Breast epithelium (tissue), 4 donors: ENCODE measurements at regions of chr3 and their contacts with region 1.

Region 1: GRCh38 chr3:3165241-3165640 is 14.2 kb downstream of the CRBN start:
- DNase-seq: no peak
- H3K4me3 ChIP-seq: no peak overlapping the region
- H3K27ac ChIP-seq: no peak overlapping the region
- H3K4me1 ChIP-seq: no peaks in the 10 kb centered on the region
- H3K27me3 ChIP-seq: no peaks in the 10 kb centered on the region
- CTCF ChIP-seq: no peak
- POLR2A ChIP-seq: no peak

Region 2: DNA sequence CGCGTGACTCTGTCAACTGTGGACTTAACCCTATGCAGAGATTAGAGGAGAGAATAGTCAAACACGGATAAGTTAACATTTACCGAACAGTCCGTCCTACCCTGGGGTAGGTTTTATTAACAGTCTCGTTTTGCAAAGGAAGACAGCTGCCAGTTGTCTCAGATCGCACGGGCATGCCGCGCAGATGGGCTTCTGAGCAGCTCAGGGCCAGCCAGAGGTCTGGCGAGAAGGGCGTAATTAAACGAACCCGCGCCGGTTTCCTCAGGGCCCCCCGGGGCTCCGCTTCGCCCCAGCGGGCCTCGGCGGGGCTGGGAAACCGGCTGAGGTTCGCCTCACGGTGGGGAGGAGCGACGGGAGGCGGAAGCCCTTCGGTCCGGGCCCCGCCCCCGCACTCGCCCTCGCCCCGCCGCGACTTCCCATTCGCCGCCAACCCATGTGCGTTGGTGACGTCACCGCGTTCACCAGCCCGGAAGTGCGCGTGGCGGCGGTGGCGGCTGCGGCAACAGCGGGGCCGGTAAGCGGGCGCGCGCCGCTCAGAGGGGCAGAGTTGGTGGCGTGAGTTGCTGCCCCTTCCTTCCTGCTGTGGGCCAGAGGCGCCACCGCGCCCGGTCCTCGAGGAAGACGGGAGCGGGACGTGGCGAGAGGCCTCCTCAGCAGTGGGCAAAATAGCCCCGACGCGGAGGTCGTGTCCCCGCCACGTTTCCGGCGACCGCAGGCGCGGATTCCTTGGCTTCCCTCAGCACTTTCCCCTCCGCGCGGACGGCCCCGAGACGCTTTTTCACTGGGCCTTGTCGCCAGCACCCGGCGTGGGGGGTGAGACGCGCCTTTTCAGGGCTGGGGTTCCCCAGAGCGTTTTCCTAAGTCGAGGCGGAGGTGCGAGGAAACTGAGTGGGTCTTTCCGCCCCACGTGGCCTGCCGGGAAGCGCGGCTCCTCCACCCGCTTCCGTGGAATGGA is 38.5 kb before region 1 on chr3 and contains the start of gene TRNT1:
- intact Hi-C with region 1: no loop called
- DNase-seq: peak; percentile 92 to 97
- H3K4me3 ChIP-seq: peak within 1 kb of the TSS; percentile 81 to 91 (median 81)
- H3K27ac ChIP-seq: peak within 1 kb of the TSS; percentile 90 to 92
- H3K4me1 ChIP-seq: peaks cover 2 to 7% of the 10 kb centered on the region in 2 donors
- H3K27me3 ChIP-seq: no peaks in the 10 kb centered on the region
- CTCF ChIP-seq: no peak
- POLR2A ChIP-seq: peak; percentile 41
- total RNA-seq, gene TRNT1: 16.0 to 24.0 (median 19.0) TPM

Region 3: GRCh38 chr3:4466741-4467521 is 1301.7 kb after region 1 on chr3 and contains the start of gene SUMF1:
- intact Hi-C with region 1: loop called (anchors 5 kb)
- DNase-seq: peak; percentile 67 to 75
- H3K4me3 ChIP-seq: peak within 1 kb of the TSS; percentile 78 to 99 (median 91)
- H3K27ac ChIP-seq: peak within 1 kb of the TSS; percentile 89 to 90
- H3K4me1 ChIP-seq: no peaks in the 10 kb centered on the region
- H3K27me3 ChIP-seq: no peaks in the 10 kb centered on the region
- CTCF ChIP-seq: no peak
- POLR2A ChIP-seq: no peak
- total RNA-seq, gene SUMF1: 84.2 to 87.1 (median 84.9) TPM